Activated CD4-positive, alpha-beta T cell treated with anti-CD3 and anti-CD28 coated beads for 36 hours (primary cell): ENCODE measurements at regions of chr15 and their contacts with region 1.

Region 1: DNA sequence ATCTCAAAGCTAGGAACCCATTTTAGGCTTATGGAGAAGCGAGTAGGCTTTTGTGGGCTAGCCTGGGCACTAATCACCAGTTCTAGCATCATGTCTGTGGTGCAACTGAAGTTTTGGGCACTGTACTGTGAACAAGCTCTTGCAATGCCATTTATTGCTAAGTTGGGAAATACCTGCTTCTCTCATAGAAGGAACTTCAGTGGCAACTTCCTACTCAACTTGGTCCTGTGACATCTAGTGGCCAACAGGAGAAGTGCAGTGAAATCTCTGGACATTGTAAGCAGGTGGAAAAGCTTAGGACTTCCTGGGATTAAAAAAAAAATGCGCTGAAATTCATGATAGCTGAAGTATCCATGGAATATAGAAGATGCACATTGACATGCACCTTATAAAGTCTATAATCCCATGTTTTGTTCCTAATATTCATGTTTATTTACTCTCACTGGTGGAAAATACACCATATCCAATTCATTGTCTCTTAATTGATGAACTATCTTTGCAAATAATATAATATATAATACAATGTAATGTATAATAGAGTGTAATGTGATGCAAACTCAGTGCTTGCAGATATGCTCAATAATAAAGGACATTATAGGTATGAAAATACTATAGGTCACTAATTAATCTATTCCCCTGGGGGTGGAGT is 6.5 kb upstream of the ALDH1A3 start:
- DNase-seq: peak; percentile 66
- ATAC-seq: peak; percentile 36
- H3K4me3 Mint-ChIP-seq: no peak overlapping the region
- H3K27ac Mint-ChIP-seq: no peak overlapping the region
- H3K4me1 Mint-ChIP-seq: no peaks in the 10 kb centered on the region
- H3K27me3 Mint-ChIP-seq: peaks cover 20% of the 10 kb centered on the region

Region 2: GRCh38 chr15:100349696-100350433 is 523.3 kb before region 1 on chr15:
- CTCF ChIA-PET with region 1: interaction called, 10 read pairs
- POLR2A ChIA-PET with region 1: no interaction called
- intact Hi-C with region 1: loop called (anchors 1 to 5 kb)
- DNase-seq: peak; percentile 93
- ATAC-seq: peak; percentile 95
- H3K4me3 Mint-ChIP-seq: peak overlapping the region; percentile 78
- H3K27ac Mint-ChIP-seq: peak overlapping the region; percentile 77
- H3K4me1 Mint-ChIP-seq: peaks cover 7% of the 10 kb centered on the region
- H3K27me3 Mint-ChIP-seq: peaks cover 7% of the 10 kb centered on the region

Region 3: DNA sequence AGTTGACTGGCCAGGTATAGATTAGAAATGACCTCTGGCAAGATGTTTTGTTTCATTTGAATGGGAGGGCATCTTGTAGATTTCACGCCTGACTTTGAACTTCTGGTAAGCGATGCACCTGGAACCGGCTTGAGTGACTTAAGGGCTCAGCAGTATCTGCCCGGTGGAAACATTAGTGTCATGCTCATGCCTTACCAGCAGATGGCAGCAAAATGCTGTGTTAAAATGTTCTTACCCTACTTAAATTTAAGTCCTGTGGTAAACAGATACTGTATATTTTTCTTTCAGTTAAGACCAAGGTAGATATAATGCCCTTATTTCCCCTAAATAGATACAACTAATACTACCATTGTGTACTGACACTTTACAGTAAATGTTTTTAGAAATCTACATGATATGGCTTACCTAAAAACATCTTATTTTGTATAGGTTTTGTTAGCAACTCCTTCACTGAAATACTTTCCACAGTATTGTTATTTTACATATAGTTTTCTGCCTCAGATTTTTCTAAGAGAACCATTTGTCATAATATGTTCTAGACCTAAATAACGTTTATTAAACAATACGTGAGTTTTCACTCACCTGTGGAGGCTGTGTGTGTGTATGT is 245.3 kb before region 1 on chr15:
- CTCF ChIA-PET with region 1: interaction called, 10 read pairs
- POLR2A ChIA-PET with region 1: no interaction called
- intact Hi-C with region 1: loop called (anchors 1 kb)
- DNase-seq: peak; percentile 72
- ATAC-seq: peak; percentile 84
- H3K4me3 Mint-ChIP-seq: no peak overlapping the region
- H3K27ac Mint-ChIP-seq: no peak overlapping the region
- H3K4me1 Mint-ChIP-seq: peaks cover 12% of the 10 kb centered on the region
- H3K27me3 Mint-ChIP-seq: no peaks in the 10 kb centered on the region

Region 4: GRCh38 chr15:100671858-100672543 is 201.2 kb before region 1 on chr15:
- CTCF ChIA-PET with region 1: interaction called, 4 read pairs
- POLR2A ChIA-PET with region 1: no interaction called
- intact Hi-C with region 1: loop called in 1 of 2 experiments (anchors 5 kb)
- DNase-seq: no peak
- ATAC-seq: no peak
- H3K4me3 Mint-ChIP-seq: no peak overlapping the region
- H3K27ac Mint-ChIP-seq: no peak overlapping the region
- H3K4me1 Mint-ChIP-seq: no peaks in the 10 kb centered on the region
- H3K27me3 Mint-ChIP-seq: peaks cover 5% of the 10 kb centered on the region

Region 5: DNA sequence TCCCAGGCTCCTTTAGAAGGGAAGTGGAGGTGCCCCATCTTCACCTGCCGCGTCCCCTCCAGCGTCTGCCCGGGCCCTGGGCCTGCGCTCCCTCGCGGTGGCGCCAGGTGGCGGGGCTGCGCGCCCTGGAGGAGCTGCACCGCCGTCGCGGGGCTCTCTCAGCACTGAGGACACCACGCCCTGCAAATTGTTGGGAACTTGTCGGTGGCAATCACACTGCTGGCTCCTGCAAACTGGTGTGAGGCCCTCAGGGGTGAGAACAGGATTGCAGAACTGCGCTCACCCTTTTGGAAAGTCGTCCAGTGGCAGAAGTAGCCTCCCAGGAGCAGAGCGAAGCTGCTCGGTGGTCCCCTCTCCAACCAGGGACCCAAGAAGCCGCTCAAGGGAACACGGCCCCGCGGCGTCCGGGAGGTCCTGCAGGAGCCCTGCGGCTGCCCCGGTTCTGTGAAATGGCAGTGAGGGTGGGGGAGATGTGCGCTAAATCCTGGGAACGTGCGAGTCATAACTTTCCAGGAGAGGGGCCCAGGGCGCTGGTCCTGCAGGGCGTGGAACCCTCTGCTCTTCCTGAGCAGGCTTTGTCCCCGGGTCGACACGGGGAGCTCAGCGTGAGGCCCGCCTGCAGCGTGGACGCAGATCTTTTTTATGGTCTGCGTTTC is 45.0 kb after region 1 on chr15:
- CTCF ChIA-PET with region 1: interaction called, 14 read pairs
- POLR2A ChIA-PET with region 1: no interaction called
- intact Hi-C with region 1: no loop called
- DNase-seq: peak; percentile 84
- ATAC-seq: peak; percentile 94
- H3K4me3 Mint-ChIP-seq: peak overlapping the region; percentile 66
- H3K27ac Mint-ChIP-seq: peak overlapping the region; percentile 0
- H3K4me1 Mint-ChIP-seq: peaks cover 15% of the 10 kb centered on the region
- H3K27me3 Mint-ChIP-seq: peaks cover 55% of the 10 kb centered on the region

Region 6: GRCh38 chr15:100947760-100948429 is 74.7 kb after region 1 on chr15:
- CTCF ChIA-PET with region 1: no interaction called
- POLR2A ChIA-PET with region 1: no interaction called
- intact Hi-C with region 1: no loop called
- DNase-seq: no peak
- ATAC-seq: no peak
- H3K4me3 Mint-ChIP-seq: no peak overlapping the region
- H3K27ac Mint-ChIP-seq: no peak overlapping the region
- H3K4me1 Mint-ChIP-seq: no peaks in the 10 kb centered on the region
- H3K27me3 Mint-ChIP-seq: peaks cover 13% of the 10 kb centered on the region